ENCODE measurements at regions of chr5 and their contacts with region 1.

Region 1: GRCh38 chr5:62779010-62779422 is 200.4 kb downstream of the LRRC70 start:
- DNase-seq: peak in 1 of 4 donors; percentile 39
- ATAC-seq: peak; percentile 98
- H3K4me3 ChIP-seq: no peak overlapping the region
- H3K27ac ChIP-seq: no peak overlapping the region
- H3K4me1 ChIP-seq: peaks cover 0 to 12% of the 10 kb centered on the region in 2 donors
- H3K27me3 ChIP-seq: no peaks in the 10 kb centered on the region
- CTCF ChIP-seq: peak; percentile 69 to 70

Region 2: GRCh38 chr5:61981886-61982285 is 797.1 kb before region 1 on chr5:
- intact Hi-C with region 1: no loop called
- DNase-seq: no peak
- ATAC-seq: no peak
- H3K4me3 ChIP-seq: no peak overlapping the region
- H3K27ac ChIP-seq: no peak overlapping the region
- H3K4me1 ChIP-seq: no peaks in the 10 kb centered on the region
- H3K27me3 ChIP-seq: no peaks in the 10 kb centered on the region
- CTCF ChIP-seq: no peak

Region 3: DNA sequence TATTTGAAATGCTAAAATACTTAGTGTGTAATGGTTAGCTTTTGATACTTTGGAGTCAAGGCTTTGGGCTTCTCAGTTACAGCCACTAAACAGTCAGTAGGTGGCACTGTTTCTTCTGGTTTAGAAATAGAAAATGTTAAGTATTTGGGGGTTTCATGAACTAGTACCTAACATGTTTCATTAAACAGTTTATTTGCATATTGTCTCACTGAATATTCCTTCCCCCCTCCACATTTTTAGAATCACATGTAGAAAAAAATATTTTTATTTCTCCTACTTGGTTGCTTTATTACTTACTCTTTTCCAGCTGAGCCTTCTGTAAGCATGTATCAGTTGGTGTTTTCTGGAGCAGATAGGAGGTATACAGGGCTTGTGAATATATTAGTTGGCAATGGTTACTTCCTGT is 318.4 kb before region 1 on chr5:
- intact Hi-C with region 1: loop called in 1 of 2 experiments (anchors 10 kb)
- DNase-seq: peak in 2 of 4 donors; percentile 36 to 57
- ATAC-seq: peak; percentile 79
- H3K4me3 ChIP-seq: no peak overlapping the region
- H3K27ac ChIP-seq: no peak overlapping the region
- H3K4me1 ChIP-seq: peaks cover 0 to 9% of the 10 kb centered on the region in 2 donors
- H3K27me3 ChIP-seq: no peaks in the 10 kb centered on the region
- CTCF ChIP-seq: peak; percentile 75 to 79

Measured in left lung (tissue), 14 donors.